GM18951 (cell line): ENCODE measurements at regions of chr12 and their contacts with region 1.

Region 1: GRCh38 chr12:47837190-47838171 is 17.8 kb upstream of the HDAC7 start:
- POLR2A ChIP-seq: no peak

Region 2: DNA sequence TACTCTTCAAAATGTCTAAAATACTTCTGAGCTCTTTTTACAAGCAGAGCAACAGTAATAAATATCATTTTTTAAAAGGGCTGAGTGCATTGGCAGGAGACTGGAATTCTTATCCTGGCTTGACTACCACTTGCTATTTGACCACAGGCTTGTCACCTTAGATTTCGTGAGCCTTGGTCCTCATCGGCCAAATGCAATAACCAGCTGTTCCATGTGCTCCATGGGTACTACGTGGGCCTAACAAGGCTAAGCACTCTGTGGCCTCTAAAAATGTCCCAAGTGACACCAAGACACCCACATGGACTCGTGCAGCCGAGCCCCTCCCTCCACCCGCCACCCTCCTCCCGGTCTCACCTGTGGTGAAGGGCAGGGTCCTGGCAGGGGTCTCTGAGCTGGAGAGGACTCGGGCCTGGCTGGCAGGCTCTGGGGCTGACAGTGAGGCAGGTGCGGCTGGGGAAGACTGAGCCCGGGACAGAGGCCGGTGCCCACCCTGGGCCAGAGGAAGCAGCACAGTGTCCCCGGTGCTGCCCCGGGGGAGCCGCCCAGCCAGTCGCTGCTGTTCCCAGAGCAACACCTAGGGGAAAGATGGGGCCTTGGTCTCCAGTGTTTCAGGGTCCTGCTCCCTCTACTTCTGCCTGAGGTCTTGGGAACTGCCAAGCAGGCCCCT is 44.3 kb before region 1 on chr12:
- in situ Hi-C with region 1: loop called (anchors 5 kb)
- POLR2A ChIP-seq: no peak